Spleen (tissue), 13 donors: ENCODE measurements at regions of chr16 and their contacts with region 1.

Region 1: DNA sequence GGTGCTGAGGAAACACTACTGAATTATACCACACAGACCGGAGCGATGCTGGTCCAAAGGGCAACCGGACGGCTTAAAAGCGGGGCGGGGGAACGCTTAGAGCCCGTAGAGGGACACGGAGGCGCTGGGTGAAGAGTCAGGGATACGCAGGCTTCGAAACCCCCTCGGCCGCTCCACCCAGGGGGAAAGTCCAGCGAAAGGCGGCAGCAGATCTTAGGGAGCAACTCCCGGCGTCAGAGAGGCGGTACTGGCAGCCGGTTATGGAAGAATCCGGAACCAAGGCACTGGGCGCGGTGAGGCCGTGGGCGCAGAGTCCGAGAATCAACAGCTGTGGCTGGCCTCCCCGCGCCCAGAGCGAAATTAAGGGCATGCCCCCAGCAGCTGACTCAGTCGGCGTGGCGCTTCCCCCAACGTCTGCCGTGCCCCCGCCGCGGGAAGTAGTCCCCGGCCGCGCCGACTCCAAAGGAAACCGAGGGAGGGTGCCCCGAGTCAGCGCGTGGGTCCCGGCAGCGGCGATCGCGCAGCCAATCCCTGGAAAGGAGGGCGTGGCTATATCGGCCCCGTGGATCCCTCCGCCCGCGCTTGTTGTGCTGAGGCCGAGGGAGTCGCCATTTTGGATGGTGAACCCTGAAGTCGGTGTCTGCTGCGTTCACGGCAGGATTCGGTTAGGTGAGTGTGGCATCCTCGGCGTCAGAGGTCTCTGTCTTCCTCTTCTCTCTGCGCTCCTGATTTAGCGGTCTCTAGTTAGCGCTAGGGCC is at the start of gene IST1:
- DNase-seq: peak; percentile 99
- H3K4me3 ChIP-seq: peak within 1 kb of the TSS; percentile 64 to 95 (median 85)
- H3K27ac ChIP-seq: peak within 1 kb of the TSS; percentile 93 to 99 (median 97)
- H3K4me1 ChIP-seq: peaks cover 31 to 50% (median 46%) of the 10 kb centered on the region in 6 donors
- H3K27me3 ChIP-seq: no peaks in the 10 kb centered on the region
- CTCF ChIP-seq: peak in 5 of 11 experiments; percentile 14 to 43 (median 27)
- POLR2A ChIP-seq: peak in 2 of 3 donors; percentile 29 to 44
- total RNA-seq, gene IST1: 208 to 249 (median 232) TPM

Region 2: GRCh38 chr16:71808593-71809459 is 86.3 kb before region 1 on chr16 and contains the start of gene AP1G1:
- intact Hi-C with region 1: loop called (anchors 5 kb)
- DNase-seq: peak; percentile 99
- H3K4me3 ChIP-seq: peak within 1 kb of the TSS; percentile 71 to 100 (median 94)
- H3K27ac ChIP-seq: peak within 1 kb of the TSS; percentile 84 to 100 (median 98)
- H3K4me1 ChIP-seq: peaks cover 29 to 60% (median 41%) of the 10 kb centered on the region in 6 donors
- H3K27me3 ChIP-seq: no peaks in the 10 kb centered on the region
- CTCF ChIP-seq: peak in 1 of 11 experiments; percentile 12
- POLR2A ChIP-seq: peak in 1 of 3 donors; percentile 47
- total RNA-seq, gene AP1G1: 86.2 to 125 (median 104) TPM

Region 3: GRCh38 chr16:72013888-72014581 is 118.9 kb after region 1 on chr16:
- intact Hi-C with region 1: no loop called
- DNase-seq: peak; percentile 81
- H3K4me3 ChIP-seq: peak overlapping the region in 3 of 8 donors; percentile 0 to 14 (median 9)
- H3K27ac ChIP-seq: peak overlapping the region; percentile 29 to 77 (median 70)
- H3K4me1 ChIP-seq: peaks cover 2 to 40% (median 18%) of the 10 kb centered on the region in 6 donors
- H3K27me3 ChIP-seq: no peaks in the 10 kb centered on the region
- CTCF ChIP-seq: no peak
- POLR2A ChIP-seq: no peak

Region 4: GRCh38 chr16:72025759-72026114 is 130.6 kb after region 1 on chr16:
- intact Hi-C with region 1: no loop called
- DNase-seq: no peak
- H3K4me3 ChIP-seq: no peak overlapping the region
- H3K27ac ChIP-seq: no peak overlapping the region
- H3K4me1 ChIP-seq: no peaks in the 10 kb centered on the region
- H3K27me3 ChIP-seq: no peaks in the 10 kb centered on the region
- CTCF ChIP-seq: no peak
- POLR2A ChIP-seq: no peak

Region 5: GRCh38 chr16:72093448-72094265 is 198.6 kb after region 1 on chr16 and contains the starts of genes DHX38 and TXNL4B:
- intact Hi-C with region 1: loop called (anchors 10 kb)
- DNase-seq: peak; percentile 96
- H3K4me3 ChIP-seq: peak within 1 kb of the TSS; percentile 60 to 93 (median 86)
- H3K27ac ChIP-seq: peak within 1 kb of the TSS; percentile 89 to 97 (median 92)
- H3K4me1 ChIP-seq: peaks cover 27 to 58% (median 40%) of the 10 kb centered on the region in 6 donors
- H3K27me3 ChIP-seq: no peaks in the 10 kb centered on the region
- CTCF ChIP-seq: peak in 6 of 11 experiments; percentile 8 to 50 (median 29)
- POLR2A ChIP-seq: peak in 2 of 3 donors; percentile 33 to 60
- total RNA-seq, gene DHX38: 60.3 to 89.3 (median 73.0) TPM
- total RNA-seq, gene TXNL4B: 12.2 to 21.3 (median 16.0) TPM